KBM-7 (cell line): ENCODE measurements at regions of chrX and their contacts with region 1.

Region 1: GRCh38 chrX:13653022-13653693 is at the start of gene TCEANC:
- DNase-seq: peak; percentile 98

Region 2: DNA sequence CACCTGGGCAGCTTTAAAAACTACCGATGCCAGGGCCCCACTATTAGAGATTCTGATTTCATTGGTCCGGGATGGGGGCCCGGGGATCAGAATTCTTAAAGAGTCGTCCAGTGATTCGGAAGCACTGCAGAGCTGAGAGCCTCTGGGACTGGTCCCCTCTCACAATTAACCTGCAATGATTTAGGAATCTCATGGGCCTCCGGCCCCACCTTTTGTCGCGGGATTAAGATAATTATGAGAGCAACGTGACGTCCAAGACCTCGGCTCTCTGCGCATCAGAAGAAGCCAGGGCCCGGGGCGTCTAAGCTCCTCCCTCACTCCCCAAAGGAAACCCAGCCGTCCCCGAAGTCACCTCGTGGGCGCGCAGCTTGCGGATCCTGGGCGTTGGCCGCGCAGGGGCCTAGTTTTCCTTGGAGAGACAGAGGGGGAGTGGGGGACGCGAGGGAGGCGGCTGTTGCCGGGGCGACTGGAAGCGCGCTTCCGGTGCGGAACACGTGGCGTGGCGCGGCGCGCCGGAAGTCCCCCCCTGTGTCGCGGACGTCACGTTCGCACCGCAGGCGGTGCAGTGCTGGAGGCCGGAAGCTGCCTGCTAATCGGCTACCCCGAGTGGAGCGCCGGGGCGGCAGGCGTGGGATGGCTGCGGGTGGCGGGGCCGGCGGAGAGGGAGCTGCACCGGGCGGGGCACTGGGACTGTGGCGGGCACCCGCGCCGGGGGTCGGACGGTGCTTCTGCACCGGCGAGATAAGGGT is 376.4 kb after region 1 on chrX and contains the start of gene GEMIN8:
- in situ Hi-C with region 1: loop called (anchors 25 kb)
- DNase-seq: peak; percentile 95